Esophagus squamous epithelium (tissue), 5 donors: ENCODE measurements at regions of chr15 and their contacts with region 1.

Region 1: GRCh38 chr15:88834211-88834812 is 31.1 kb downstream of the ACAN start:
- DNase-seq: no peak
- H3K4me3 ChIP-seq: no peak overlapping the region
- H3K27ac ChIP-seq: no peak overlapping the region
- H3K4me1 ChIP-seq: peaks cover 0 to 5% (median 0%) of the 10 kb centered on the region in 3 donors
- H3K27me3 ChIP-seq: no peaks in the 10 kb centered on the region
- CTCF ChIP-seq: peak; percentile 19 to 59 (median 35)
- POLR2A ChIP-seq: no peak

Region 2: DNA sequence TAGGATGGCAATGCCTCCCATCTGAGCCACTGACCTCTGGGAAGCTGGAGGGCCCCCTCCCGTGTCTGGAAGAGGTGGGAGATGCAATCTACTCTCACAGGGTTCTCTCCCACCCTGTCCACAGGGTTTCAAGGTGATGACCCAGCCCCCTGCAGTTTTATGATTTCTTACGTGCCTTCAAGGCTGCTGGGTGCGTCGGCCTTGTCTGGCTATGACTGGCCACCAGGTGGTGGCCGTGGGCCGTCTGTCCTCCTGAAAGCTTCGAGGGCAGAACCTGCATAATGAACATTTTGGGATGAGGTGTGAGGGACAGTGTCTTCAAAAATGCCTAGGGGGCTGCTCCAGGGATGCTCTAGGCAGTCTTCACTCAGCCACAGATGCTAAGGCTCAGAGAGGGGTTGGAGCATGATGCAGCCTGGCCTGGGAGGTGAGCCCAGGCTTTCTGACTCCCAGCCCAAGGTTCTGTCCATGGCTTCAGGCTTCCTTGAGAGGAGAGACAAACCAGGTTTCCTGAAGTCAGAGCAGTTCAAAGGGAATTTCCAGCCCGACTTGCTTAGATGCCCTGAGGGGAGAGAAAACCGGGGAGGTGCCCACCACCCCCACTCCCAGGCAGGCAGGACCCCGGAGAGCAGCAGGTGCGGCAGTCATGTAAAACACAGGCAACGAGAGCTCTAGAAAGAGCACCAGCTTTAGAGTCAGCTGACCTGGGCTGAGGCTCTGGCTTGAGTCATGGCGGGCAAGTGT is 176.8 kb before region 1 on chr15:
- intact Hi-C with region 1: loop called (anchors 10 kb)
- DNase-seq: no peak
- H3K4me3 ChIP-seq: no peak overlapping the region
- H3K27ac ChIP-seq: no peak overlapping the region
- H3K4me1 ChIP-seq: peaks cover 7 to 45% (median 9%) of the 10 kb centered on the region in 3 donors
- H3K27me3 ChIP-seq: peaks cover 0 to 9% (median 0%) of the 10 kb centered on the region in 4 donors
- CTCF ChIP-seq: peak; percentile 24 to 72 (median 51)
- POLR2A ChIP-seq: no peak

Region 3: GRCh38 chr15:88897456-88898194 is 63.3 kb after region 1 on chr15:
- intact Hi-C with region 1: no loop called
- DNase-seq: no peak
- H3K4me3 ChIP-seq: peak overlapping the region in 2 of 4 donors; percentile 12 to 14
- H3K27ac ChIP-seq: peak overlapping the region; percentile 8 to 73 (median 68)
- H3K4me1 ChIP-seq: peaks cover 29 to 52% (median 36%) of the 10 kb centered on the region in 3 donors
- H3K27me3 ChIP-seq: peaks cover 0 to 25% (median 0%) of the 10 kb centered on the region in 4 donors
- CTCF ChIP-seq: peak; percentile 43 to 79 (median 68)
- POLR2A ChIP-seq: no peak